Activated CD4-positive, alpha-beta memory T cell treated with anti-CD3 and anti-CD28 coated beads for 36 hours (primary cell): ENCODE measurements at regions of chr5 and their contacts with region 1.

Region 1: DNA sequence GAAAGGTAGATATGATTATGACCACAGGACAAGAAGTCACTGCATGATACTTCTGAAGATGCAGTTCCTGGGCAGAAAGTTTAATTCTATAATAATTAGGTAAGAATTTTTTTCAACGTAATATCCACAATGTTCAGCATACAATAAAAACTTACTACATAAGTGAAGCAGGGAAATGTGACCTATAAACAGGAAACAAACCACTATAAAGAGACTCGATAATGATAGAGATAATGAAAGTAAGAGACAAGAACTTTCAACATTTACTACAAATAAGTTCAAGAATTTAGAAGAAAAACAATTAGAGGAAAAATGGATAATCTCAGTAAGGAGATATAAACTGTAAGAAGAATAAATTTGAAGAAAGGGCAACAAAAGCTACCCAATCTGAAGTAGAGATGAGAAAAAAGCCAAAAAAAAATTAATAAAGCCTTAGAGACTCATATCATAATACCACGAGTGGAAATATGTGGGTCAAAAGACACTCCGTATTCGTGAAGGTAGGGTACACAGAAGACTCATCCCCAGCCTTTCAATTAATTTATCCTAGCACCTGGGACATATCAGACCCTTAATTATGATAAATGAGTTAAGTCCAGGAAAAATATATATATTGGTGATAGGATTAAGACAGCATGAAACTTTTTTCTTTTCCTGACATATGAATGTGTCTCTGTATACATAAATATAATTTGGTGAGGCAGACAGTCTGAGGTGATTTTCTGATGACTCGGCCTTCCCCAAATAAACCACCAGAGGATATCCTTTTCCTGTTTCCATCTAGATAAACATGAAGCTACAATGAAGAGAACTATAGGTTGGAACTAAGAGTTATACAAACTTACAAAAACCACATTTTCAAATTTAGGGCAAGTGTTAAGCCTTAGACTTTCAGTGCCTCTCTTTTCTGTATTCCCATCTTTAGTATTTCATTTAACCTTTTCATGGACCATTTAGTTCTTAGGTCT is 120.4 kb downstream of the RAPGEF6 start:
- DNase-seq: no peak
- H3K4me3 Mint-ChIP-seq: peak overlapping the region; percentile 60
- H3K27ac Mint-ChIP-seq: peak overlapping the region; percentile 65
- H3K4me1 Mint-ChIP-seq: peaks cover 54% of the 10 kb centered on the region
- H3K27me3 Mint-ChIP-seq: no peaks in the 10 kb centered on the region

Region 2: DNA sequence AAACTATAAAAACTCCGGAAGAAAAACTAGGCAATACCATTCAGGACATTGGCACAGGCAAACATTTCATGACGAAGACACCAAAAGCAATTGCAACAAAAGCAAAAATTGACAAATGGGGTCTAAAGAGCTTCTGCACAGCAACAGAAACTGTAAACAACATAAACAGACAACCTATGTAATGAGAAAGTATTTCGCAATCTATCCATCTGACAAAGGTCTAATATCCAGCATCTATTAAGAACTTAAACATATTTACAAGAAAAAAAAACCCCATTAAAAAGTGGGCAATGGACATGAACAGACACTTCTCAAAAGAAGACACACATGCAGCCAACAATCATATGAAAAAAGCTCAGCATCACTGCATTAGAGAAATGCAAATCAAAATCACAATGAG is 848.1 kb before region 1 on chr5:
- CTCF ChIA-PET with region 1: no interaction called
- POLR2A ChIA-PET with region 1: no interaction called
- intact Hi-C with region 1: no loop called
- DNase-seq: no peak
- H3K4me3 Mint-ChIP-seq: no peak overlapping the region
- H3K27ac Mint-ChIP-seq: no peak overlapping the region
- H3K4me1 Mint-ChIP-seq: no peaks in the 10 kb centered on the region
- H3K27me3 Mint-ChIP-seq: peaks cover 6% of the 10 kb centered on the region

Region 3: GRCh38 chr5:131488463-131488862 is 26.1 kb before region 1 on chr5:
- CTCF ChIA-PET with region 1: no interaction called
- POLR2A ChIA-PET with region 1: no interaction called
- intact Hi-C with region 1: loop called (anchors 2 kb)
- DNase-seq: no peak
- H3K4me3 Mint-ChIP-seq: peak overlapping the region; percentile 16
- H3K27ac Mint-ChIP-seq: peak overlapping the region; percentile 70
- H3K4me1 Mint-ChIP-seq: peaks cover 30% of the 10 kb centered on the region
- H3K27me3 Mint-ChIP-seq: no peaks in the 10 kb centered on the region

Region 4: GRCh38 chr5:131575660-131576227 is 61.1 kb after region 1 on chr5:
- CTCF ChIA-PET with region 1: no interaction called
- POLR2A ChIA-PET with region 1: no interaction called
- intact Hi-C with region 1: no loop called
- DNase-seq: no peak
- H3K4me3 Mint-ChIP-seq: no peak overlapping the region
- H3K27ac Mint-ChIP-seq: no peak overlapping the region
- H3K4me1 Mint-ChIP-seq: peaks cover 10% of the 10 kb centered on the region
- H3K27me3 Mint-ChIP-seq: no peaks in the 10 kb centered on the region

Region 5: DNA sequence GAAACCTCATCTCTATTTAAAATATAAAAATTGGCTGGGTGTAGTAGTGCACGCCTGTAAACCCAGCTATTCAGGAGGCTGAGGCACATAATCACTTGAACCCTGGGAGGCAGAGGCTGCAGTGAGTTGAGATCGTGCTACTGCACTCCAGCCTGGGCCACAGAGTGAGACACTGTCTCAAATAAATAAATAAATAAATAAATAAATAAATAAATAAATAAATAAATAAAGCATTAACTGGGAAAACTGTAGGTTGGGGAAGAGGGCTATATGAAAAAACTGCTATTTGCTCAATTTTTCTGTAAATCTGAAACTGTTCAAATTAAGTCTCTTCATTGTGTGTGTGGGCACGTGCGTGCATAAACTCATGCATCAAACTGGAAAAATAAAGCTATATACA is 180.3 kb after region 1 on chr5:
- CTCF ChIA-PET with region 1: no interaction called
- POLR2A ChIA-PET with region 1: no interaction called
- intact Hi-C with region 1: no loop called
- DNase-seq: no peak
- H3K4me3 Mint-ChIP-seq: no peak overlapping the region
- H3K27ac Mint-ChIP-seq: no peak overlapping the region
- H3K4me1 Mint-ChIP-seq: no peaks in the 10 kb centered on the region
- H3K27me3 Mint-ChIP-seq: no peaks in the 10 kb centered on the region